ENCODE measurements at regions of chr14 and their contacts with region 1.

Region 1: DNA sequence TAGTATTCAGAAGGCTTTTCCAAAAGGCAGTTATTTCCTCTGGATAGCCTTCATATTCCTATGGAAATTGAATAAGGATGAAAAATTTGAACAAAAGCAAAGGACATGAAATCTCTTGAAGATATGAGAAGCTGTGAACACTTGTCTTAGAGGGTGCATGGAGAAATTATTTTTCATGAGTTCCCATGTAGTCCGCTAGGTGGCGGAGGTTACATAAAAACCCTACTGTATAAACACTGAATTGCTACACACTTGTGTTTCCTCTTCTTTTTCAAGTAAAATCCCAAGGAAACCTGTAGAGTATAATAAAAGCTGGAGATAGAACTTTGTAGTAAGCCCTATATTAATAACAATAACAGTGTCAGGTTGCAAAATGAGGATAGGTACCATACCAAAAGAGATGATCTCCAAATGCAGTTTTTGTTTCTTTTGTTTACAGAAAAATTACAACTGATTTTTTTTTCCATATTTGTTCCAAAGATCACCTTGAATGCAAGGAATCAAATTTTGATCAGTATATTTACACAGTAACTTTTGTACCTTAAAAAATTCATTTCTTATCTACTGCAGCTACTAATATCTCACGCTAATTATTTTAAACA is 37.8 kb upstream of the OR4E1 start:
- DNase-seq: peak; percentile 45
- ATAC-seq: peak; percentile 73
- H3K4me3 Mint-ChIP-seq: peak overlapping the region; percentile 41
- H3K27ac Mint-ChIP-seq: no peak overlapping the region
- H3K4me1 Mint-ChIP-seq: peaks cover 3% of the 10 kb centered on the region
- H3K27me3 Mint-ChIP-seq: peaks cover 19% of the 10 kb centered on the region
- CTCF ChIP-seq: peak; percentile 88

Region 2: GRCh38 chr14:21133901-21134300 is 577.6 kb before region 1 on chr14:
- CTCF ChIA-PET with region 1: no interaction called
- POLR2A ChIA-PET with region 1: no interaction called
- intact Hi-C with region 1: no loop called
- DNase-seq: no peak
- ATAC-seq: no peak
- H3K4me3 Mint-ChIP-seq: no peak overlapping the region
- H3K27ac Mint-ChIP-seq: no peak overlapping the region
- H3K4me1 Mint-ChIP-seq: no peaks in the 10 kb centered on the region
- H3K27me3 Mint-ChIP-seq: no peaks in the 10 kb centered on the region
- CTCF ChIP-seq: no peak

Region 3: DNA sequence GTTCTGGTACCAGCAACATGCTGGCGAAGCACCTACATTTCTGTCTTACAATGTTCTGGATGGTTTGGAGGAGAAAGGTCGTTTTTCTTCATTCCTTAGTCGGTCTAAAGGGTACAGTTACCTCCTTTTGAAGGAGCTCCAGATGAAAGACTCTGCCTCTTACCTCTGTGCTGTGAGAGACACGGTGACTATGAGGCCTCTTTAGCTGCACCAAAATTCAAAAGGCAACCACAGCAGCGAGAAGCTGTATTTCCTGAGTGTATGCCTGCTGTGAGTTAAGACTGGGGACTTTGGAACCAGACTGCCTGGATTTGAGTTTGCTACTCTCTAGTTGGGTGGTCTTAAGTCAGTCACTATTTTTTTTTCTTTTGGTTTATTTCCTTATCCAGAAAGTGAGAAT is 68.1 kb before region 1 on chr14:
- CTCF ChIA-PET with region 1: interaction called, 11 read pairs
- POLR2A ChIA-PET with region 1: no interaction called
- intact Hi-C with region 1: loop called (anchors 5 kb)
- DNase-seq: no peak
- ATAC-seq: no peak
- H3K4me3 Mint-ChIP-seq: peak overlapping the region; percentile 61
- H3K27ac Mint-ChIP-seq: peak overlapping the region; percentile 27
- H3K4me1 Mint-ChIP-seq: no peaks in the 10 kb centered on the region
- H3K27me3 Mint-ChIP-seq: peaks cover 5% of the 10 kb centered on the region
- CTCF ChIP-seq: no peak

Region 4: DNA sequence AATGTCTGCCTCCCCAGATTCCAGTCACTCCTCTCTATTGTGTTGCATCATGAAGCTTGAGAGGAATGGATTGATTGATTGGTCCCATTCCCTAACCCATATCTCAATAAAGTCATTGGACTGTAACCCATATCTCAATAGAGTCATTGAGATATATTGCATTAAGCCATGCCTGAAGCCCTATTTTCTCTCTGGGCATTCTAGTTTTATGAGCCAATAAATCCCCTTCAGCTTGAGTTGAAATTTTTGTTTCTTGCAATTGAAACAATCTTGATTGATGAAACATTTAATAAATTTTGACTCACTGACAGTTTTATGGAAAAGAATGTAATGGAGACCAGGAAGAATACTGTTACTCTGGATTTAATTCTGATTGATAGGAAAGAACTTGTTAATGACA is 17.0 kb before region 1 on chr14:
- CTCF ChIA-PET with region 1: interaction called, 11 read pairs
- POLR2A ChIA-PET with region 1: no interaction called
- intact Hi-C with region 1: no loop called
- DNase-seq: no peak
- ATAC-seq: no peak
- H3K4me3 Mint-ChIP-seq: no peak overlapping the region
- H3K27ac Mint-ChIP-seq: no peak overlapping the region
- H3K4me1 Mint-ChIP-seq: no peaks in the 10 kb centered on the region
- H3K27me3 Mint-ChIP-seq: peaks cover 12% of the 10 kb centered on the region
- CTCF ChIP-seq: no peak

Region 5: DNA sequence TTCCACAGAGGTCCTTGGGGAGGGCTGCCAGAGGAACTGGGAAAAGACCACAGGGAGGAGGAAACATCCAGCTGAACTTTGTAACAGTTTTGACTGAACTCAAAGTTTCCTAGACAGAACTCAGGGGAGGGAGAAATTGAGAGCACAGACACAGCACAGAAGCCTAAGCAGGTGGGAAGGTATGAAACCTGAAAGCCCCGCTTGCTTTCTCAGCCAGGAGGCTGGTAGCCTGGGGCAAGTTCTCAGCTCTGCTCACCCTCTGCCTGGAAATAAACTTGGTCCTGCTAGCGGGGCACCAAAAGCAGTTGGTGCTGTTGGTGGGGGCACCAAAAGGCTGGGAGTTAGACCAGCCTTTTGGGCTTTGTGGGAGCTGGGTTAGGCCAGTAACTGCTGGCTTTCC is 11.9 kb before region 1 on chr14:
- CTCF ChIA-PET with region 1: interaction called, 11 read pairs
- POLR2A ChIA-PET with region 1: no interaction called
- intact Hi-C with region 1: no loop called
- DNase-seq: no peak
- ATAC-seq: no peak
- H3K4me3 Mint-ChIP-seq: no peak overlapping the region
- H3K27ac Mint-ChIP-seq: no peak overlapping the region
- H3K4me1 Mint-ChIP-seq: peaks cover 15% of the 10 kb centered on the region
- H3K27me3 Mint-ChIP-seq: peaks cover 11% of the 10 kb centered on the region
- CTCF ChIP-seq: no peak

Region 6: GRCh38 chr14:21723431-21724045 is 12.1 kb after region 1 on chr14:
- CTCF ChIA-PET with region 1: interaction called, 83 read pairs
- POLR2A ChIA-PET with region 1: interaction called, 5 read pairs
- intact Hi-C with region 1: no loop called
- DNase-seq: peak; percentile 68
- ATAC-seq: peak; percentile 93
- H3K4me3 Mint-ChIP-seq: peak overlapping the region; percentile 71
- H3K27ac Mint-ChIP-seq: peak overlapping the region; percentile 43
- H3K4me1 Mint-ChIP-seq: no peaks in the 10 kb centered on the region
- H3K27me3 Mint-ChIP-seq: peaks cover 29% of the 10 kb centered on the region
- CTCF ChIP-seq: peak; percentile 38

Region 7: DNA sequence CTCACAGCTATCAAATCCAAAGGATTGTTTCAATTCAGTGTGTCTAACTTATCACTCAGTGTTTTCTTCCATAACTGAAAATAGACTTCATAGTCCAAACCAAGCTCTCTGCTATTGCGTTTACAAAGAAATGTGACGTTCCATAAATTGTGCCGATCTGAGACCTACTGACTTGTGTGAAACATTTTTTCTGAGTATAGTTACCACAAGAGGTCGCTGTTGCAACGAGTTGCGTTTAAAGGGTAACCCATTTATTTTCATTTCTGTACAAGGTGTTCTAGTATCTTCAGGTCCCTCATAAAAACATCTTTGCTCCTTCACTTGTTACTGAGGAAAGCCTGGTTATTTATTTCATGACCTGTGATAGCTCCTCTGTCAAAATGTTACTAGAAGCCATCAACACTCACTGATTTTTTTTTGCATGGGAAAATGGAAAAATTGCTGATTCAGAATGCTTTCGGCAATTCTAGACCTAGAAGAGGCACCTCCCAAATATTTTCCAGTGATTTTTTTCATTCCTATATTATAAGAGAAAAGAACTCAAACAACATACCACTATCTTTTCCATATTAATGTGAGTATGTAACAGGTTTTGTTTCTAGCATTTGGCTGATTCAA is 23.1 kb after region 1 on chr14:
- CTCF ChIA-PET with region 1: interaction called, 32 read pairs
- POLR2A ChIA-PET with region 1: no interaction called
- intact Hi-C with region 1: no loop called
- DNase-seq: peak; percentile 57
- ATAC-seq: peak; percentile 50
- H3K4me3 Mint-ChIP-seq: peak overlapping the region; percentile 62
- H3K27ac Mint-ChIP-seq: no peak overlapping the region
- H3K4me1 Mint-ChIP-seq: peaks cover 14% of the 10 kb centered on the region
- H3K27me3 Mint-ChIP-seq: peaks cover 21% of the 10 kb centered on the region
- CTCF ChIP-seq: peak; percentile 86

Region 8: GRCh38 chr14:21748869-21749303 is 37.4 kb after region 1 on chr14:
- CTCF ChIA-PET with region 1: interaction called, 12 read pairs
- POLR2A ChIA-PET with region 1: no interaction called
- intact Hi-C with region 1: no loop called
- DNase-seq: peak; percentile 81
- ATAC-seq: peak; percentile 87
- H3K4me3 Mint-ChIP-seq: peak overlapping the region; percentile 51
- H3K27ac Mint-ChIP-seq: peak overlapping the region; percentile 9
- H3K4me1 Mint-ChIP-seq: peaks cover 8% of the 10 kb centered on the region
- H3K27me3 Mint-ChIP-seq: peaks cover 8% of the 10 kb centered on the region
- CTCF ChIP-seq: peak; percentile 73